ENCODE measurements at regions of chr13 and their contacts with region 1.

Region 1: DNA sequence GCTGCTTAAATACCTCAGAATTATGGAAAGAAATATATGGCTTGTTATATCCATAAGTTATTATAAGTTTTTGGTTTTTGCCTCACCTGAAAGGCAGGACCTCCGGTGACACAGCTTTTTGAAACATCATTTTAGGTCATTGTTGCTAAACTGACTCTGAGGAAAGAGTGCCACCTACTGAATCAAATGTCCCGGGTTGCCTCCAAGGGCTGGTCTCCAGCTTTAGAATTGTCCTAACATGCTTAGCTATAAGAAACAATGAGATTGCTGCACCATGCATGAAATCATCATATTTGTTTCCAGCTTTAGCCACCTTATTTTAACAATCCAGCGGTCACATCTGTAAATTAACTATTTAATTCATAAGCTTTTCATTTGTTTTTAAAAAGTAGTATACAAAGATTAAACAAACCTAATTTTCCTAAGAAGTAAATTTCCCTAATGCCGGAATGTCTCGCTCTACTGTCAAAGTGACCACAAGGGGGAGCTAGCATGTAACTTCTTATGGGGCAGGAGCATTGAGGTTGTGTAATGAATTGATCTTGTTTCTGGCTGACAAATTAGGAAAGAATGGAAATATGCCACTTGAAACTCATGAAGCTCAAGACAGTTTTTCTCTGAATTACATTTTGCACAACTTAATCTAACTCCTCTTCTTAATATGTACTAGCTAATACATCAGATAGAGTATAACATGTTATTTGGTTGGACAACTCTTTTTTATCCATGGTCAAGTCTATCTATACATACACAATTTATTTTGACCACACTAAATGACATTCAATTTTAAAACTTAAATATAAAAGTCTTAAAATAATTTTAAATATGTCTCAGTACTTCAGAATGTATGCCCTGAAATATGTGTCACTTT is 6.7 kb upstream of the PCDH17 start:
- DNase-seq: no peak
- ATAC-seq: no peak
- H3K4me3 ChIP-seq: no peak overlapping the region
- H3K4me3 Mint-ChIP-seq: no peak overlapping the region
- H3K27ac ChIP-seq: no peak overlapping the region
- H3K27ac Mint-ChIP-seq: no peak overlapping the region
- H3K4me1 ChIP-seq: no peaks in the 10 kb centered on the region
- H3K4me1 Mint-ChIP-seq: peaks cover 5 to 25% (median 17%) of the 10 kb centered on the region in 7 donors
- H3K27me3 ChIP-seq: no peaks in the 10 kb centered on the region
- H3K27me3 Mint-ChIP-seq: peaks cover 19 to 37% (median 25%) of the 10 kb centered on the region in 5 donors

Region 2: GRCh38 chr13:57665481-57665880 is 40.7 kb after region 1 on chr13:
- CTCF ChIA-PET with region 1: no interaction called
- POLR2A ChIA-PET with region 1: no interaction called
- intact Hi-C with region 1: no loop called
- DNase-seq: no peak
- ATAC-seq: no peak
- H3K4me3 ChIP-seq: no peak overlapping the region
- H3K4me3 Mint-ChIP-seq: no peak overlapping the region
- H3K27ac ChIP-seq: no peak overlapping the region
- H3K27ac Mint-ChIP-seq: no peak overlapping the region
- H3K4me1 ChIP-seq: no peaks in the 10 kb centered on the region
- H3K4me1 Mint-ChIP-seq: no peaks in the 10 kb centered on the region
- H3K27me3 ChIP-seq: no peaks in the 10 kb centered on the region
- H3K27me3 Mint-ChIP-seq: no peaks in the 10 kb centered on the region

Region 3: GRCh38 chr13:59318320-59318930 is 1693.6 kb after region 1 on chr13:
- CTCF ChIA-PET with region 1: no interaction called
- POLR2A ChIA-PET with region 1: no interaction called
- intact Hi-C with region 1: loop called in 1 of 2 experiments (anchors 10 kb)
- DNase-seq: peak in 8 of 9 donors; percentile 2 to 33 (median 18)
- ATAC-seq: no peak
- H3K4me3 ChIP-seq: no peak overlapping the region
- H3K4me3 Mint-ChIP-seq: no peak overlapping the region
- H3K27ac ChIP-seq: no peak overlapping the region
- H3K27ac Mint-ChIP-seq: no peak overlapping the region
- H3K4me1 ChIP-seq: no peaks in the 10 kb centered on the region
- H3K4me1 Mint-ChIP-seq: no peaks in the 10 kb centered on the region
- H3K27me3 ChIP-seq: no peaks in the 10 kb centered on the region
- H3K27me3 Mint-ChIP-seq: peaks cover 0 to 18% (median 11%) of the 10 kb centered on the region in 5 donors

Measured in naive thymus-derived CD4-positive, alpha-beta T cell (primary cell).